ENCODE measurements at regions of chr12 and their contacts with region 1.

Region 1: DNA sequence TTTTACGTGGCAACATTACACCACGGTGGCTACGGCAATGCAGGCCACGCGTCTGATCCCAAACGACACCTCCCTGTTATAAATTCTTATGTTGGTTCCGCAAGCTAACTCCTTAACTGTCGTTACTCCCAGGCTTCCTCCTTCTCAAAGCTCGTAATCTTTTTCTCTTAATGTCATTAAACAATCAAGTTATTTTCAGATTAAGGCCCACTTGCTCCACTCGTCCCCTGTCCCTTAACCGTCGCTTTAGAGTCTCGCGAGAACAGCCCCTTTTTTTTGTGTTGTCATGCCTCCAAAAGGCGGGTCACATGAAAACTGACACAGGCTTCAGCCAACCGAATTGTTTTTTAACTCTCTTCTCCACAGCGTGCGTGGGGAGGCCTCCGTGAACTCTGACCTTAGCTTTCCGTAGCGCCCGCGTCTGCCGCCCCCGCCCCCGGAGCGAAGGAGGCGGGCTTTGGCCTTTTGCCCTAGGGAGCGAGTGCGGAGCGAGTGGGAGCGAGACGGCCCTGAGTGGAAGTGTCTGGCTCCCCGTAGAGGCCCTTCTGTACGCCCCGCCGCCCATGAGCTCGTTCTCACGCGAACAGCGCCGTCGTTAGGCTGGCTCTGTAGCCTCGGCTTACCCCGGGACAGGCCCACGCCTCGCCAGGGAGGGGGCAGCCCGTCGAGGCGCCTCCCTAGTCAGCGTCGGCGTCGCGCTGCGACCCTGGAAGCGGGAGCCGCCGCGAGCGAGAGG is at the start of gene CAND1:
- DNase-seq: peak; percentile 78 to 89
- H3K4me3 ChIP-seq: peak within 1 kb of the TSS; percentile 89 to 98 (median 96)
- H3K27ac ChIP-seq: peak within 1 kb of the TSS; percentile 96
- H3K4me1 ChIP-seq: peaks cover 0 to 2% (median 0%) of the 10 kb centered on the region in 4 experiments; a peak in 1 of 7 replicates
- H3K27me3 ChIP-seq: no peaks in the 10 kb centered on the region
- CTCF ChIP-seq: no peak
- EP300 ChIP-seq: no peak
- POLR2A ChIP-seq: peak; percentile 72 to 73
- RAD21 ChIP-seq: no peak; a peak in 1 of 4 replicates
- total RNA-seq, gene CAND1: 271 and 277 TPM in 2 replicates

Region 2: DNA sequence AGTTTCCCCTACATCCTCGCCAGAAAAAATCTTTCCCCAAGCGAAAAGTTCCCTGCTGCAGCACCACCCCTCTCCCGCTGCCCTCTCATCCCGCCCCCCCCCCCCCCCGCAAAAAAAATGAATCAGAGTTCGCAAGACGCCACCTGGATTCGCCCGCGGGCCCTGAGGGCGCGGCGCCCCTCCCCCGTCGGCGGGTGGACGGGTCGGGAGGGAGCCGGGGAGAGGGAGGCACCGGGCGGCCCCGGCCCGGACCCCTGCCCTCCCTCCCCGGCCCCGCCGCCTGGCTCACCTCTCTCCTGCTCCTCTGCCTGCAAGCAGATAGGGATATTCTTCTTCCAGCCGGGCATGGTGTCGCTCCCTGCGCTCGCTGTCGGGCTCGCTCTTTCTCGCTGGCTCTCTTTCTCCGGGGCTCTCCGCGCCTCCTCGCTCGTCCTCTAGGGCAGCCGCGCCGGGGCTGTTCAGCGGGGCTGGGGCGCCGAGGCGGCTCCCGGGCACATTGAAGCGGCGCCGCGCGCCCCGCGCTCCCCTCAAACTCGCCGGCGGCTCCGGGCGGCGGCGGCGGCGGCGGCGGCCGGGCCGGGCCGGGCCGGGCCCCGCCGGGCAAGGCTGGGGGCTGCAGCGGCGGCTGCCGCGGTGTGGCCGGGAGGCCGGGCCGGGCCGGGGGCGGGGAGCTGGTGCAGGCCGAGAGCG is 200.2 kb before region 1 on chr12:
- CTCF ChIA-PET with region 1: no interaction called
- POLR2A ChIA-PET with region 1: interaction called, 11 read pairs
- DNase-seq: peak; percentile 25 to 78
- H3K4me3 ChIP-seq: peak overlapping the region; percentile 59 to 86 (median 70)
- H3K27ac ChIP-seq: no peak overlapping the region
- H3K4me1 ChIP-seq: peaks cover 4 to 10% (median 6%) of the 10 kb centered on the region in 4 experiments
- H3K27me3 ChIP-seq: no peaks in the 10 kb centered on the region; a peak in 2 of 7 replicates
- CTCF ChIP-seq: peak in 1 of 3 experiments; percentile 6; a peak in 1 of 4 replicates
- EP300 ChIP-seq: no peak
- POLR2A ChIP-seq: no peak
- RAD21 ChIP-seq: no peak

Region 3: DNA sequence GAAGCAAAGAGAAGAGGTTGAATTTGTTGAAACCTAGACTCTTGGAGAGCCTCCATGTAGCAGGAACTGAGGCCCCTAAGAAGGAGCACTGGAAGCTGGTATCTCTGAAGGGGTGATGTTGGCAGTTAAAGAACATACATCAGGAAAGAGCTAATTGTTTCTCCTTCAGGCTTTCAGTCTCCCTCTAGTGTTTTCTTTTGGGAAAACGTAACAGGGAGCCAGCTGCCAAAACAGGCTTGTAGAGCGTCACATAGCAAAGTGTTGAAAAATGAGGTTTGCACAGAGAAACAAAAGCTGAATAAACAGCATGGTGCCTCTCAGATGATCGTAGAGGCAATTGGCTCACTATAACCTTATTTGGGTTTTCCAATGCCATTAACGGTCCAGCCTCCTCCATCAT is 46.8 kb before region 1 on chr12:
- CTCF ChIA-PET with region 1: no interaction called
- POLR2A ChIA-PET with region 1: no interaction called
- DNase-seq: no peak
- H3K4me3 ChIP-seq: no peak overlapping the region
- H3K27ac ChIP-seq: no peak overlapping the region
- H3K4me1 ChIP-seq: peaks cover 0 to 4% (median 2%) of the 10 kb centered on the region in 4 experiments; a peak in 3 of 7 replicates
- H3K27me3 ChIP-seq: no peaks in the 10 kb centered on the region
- CTCF ChIP-seq: peak in 2 of 3 experiments; percentile 40 to 66; a peak in 2 of 4 replicates
- EP300 ChIP-seq: no peak
- POLR2A ChIP-seq: no peak
- RAD21 ChIP-seq: peak; percentile 67 to 69

Region 4: DNA sequence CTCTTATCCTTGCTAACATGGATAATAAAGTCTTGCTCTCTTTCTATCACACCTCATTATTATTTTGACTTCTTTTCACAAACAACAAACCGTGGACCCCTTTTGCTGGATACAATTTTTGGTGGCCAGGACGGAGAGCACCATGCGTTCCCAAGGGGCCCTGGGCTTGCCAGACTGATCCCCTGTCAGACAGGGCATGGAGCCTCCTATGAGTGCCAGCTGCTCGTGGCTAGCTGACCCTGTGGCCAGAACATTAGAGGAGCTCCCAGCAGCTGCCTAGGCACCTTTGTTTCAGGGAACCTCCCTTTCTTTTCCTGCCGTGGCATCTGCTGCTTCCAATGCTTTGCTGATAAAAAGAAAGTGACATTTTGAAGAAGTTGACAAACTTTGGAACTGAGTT is 12.4 kb before region 1 on chr12:
- CTCF ChIA-PET with region 1: interaction called, 5 read pairs
- POLR2A ChIA-PET with region 1: interaction called, 36 read pairs
- DNase-seq: no peak
- H3K4me3 ChIP-seq: no peak overlapping the region
- H3K27ac ChIP-seq: no peak overlapping the region
- H3K4me1 ChIP-seq: no peaks in the 10 kb centered on the region
- H3K27me3 ChIP-seq: no peaks in the 10 kb centered on the region
- CTCF ChIP-seq: no peak
- EP300 ChIP-seq: no peak
- POLR2A ChIP-seq: no peak
- RAD21 ChIP-seq: no peak

Region 5: GRCh38 chr12:67280572-67280971 is 11.5 kb after region 1 on chr12:
- CTCF ChIA-PET with region 1: interaction called, 6 read pairs
- POLR2A ChIA-PET with region 1: interaction called, 33 read pairs
- DNase-seq: no peak
- H3K4me3 ChIP-seq: no peak overlapping the region
- H3K27ac ChIP-seq: no peak overlapping the region
- H3K4me1 ChIP-seq: peaks cover 0 to 2% (median 0%) of the 10 kb centered on the region in 4 experiments; a peak in 1 of 7 replicates
- H3K27me3 ChIP-seq: no peaks in the 10 kb centered on the region
- CTCF ChIP-seq: no peak
- EP300 ChIP-seq: no peak
- POLR2A ChIP-seq: no peak
- RAD21 ChIP-seq: no peak

Region 6: DNA sequence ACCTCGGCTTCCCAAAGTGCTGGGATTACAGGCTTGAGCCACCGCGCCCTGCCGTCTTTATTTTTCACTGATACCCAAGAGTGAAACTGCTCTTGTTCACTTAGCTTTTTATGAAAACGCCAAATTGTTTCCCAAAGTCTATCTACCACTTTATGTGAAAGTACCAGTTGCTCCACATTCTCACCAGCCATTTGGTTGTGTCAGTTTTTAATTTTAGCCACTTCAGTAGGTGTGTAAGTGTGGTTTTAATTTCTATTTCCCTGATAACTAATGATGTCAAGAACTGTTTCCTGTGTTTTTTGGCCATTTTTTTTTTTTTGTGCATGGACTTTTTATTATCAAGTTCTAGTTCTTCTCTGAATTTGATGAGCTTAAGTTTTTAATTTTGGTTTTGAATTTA is 17.2 kb after region 1 on chr12:
- CTCF ChIA-PET with region 1: no interaction called
- POLR2A ChIA-PET with region 1: interaction called, 33 read pairs
- DNase-seq: no peak
- H3K4me3 ChIP-seq: no peak overlapping the region; a peak in 1 of 8 replicates
- H3K27ac ChIP-seq: no peak overlapping the region
- H3K4me1 ChIP-seq: no peaks in the 10 kb centered on the region
- H3K27me3 ChIP-seq: no peaks in the 10 kb centered on the region
- CTCF ChIP-seq: no peak
- EP300 ChIP-seq: no peak
- POLR2A ChIP-seq: no peak
- RAD21 ChIP-seq: no peak

Region 7: DNA sequence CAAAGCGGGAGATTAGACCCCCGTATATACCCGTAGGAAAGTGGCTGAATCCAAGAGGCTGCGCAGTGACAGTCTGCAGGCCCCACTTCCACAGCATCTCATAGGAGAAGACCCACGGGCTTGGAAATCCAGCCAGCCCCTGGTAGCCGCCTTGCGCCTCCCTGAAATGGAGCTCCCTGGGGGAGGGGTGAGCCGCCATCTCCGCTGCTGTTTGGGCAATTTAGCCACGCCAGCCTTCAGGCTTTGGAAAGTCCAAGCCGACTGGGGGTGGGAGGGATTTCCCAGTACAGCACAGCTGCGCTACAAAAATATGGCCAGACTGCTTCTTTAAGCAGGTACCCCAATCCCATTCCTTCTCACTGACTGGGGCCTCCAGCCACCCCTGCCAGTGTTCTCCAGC is 53.5 kb after region 1 on chr12:
- CTCF ChIA-PET with region 1: no interaction called
- POLR2A ChIA-PET with region 1: interaction called, 13 read pairs
- DNase-seq: no peak
- H3K4me3 ChIP-seq: no peak overlapping the region
- H3K27ac ChIP-seq: no peak overlapping the region
- H3K4me1 ChIP-seq: no peaks in the 10 kb centered on the region
- H3K27me3 ChIP-seq: no peaks in the 10 kb centered on the region
- CTCF ChIP-seq: no peak
- EP300 ChIP-seq: no peak
- POLR2A ChIP-seq: no peak; a peak in 1 of 3 replicates
- RAD21 ChIP-seq: no peak

Region 8: DNA sequence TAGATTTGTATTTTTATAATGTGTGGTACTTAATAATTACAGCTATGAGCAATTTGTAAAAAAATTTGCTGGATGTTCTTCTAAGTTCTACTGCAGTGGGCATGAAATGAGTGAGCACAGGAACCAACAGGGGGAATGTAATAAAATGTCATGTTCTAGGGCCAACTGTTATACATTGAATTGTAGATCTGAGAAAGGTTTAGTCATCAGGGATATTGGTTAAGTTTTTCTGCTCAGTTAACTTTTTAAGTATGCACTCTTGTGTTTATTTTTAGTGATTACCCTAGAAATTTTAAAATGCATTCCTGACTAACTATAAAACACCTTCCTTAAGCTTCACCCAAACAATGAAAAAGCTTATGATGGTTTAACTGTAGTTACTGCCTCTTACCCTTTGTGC is 101.9 kb after region 1 on chr12:
- CTCF ChIA-PET with region 1: no interaction called
- POLR2A ChIA-PET with region 1: no interaction called
- DNase-seq: no peak
- H3K4me3 ChIP-seq: no peak overlapping the region
- H3K27ac ChIP-seq: no peak overlapping the region
- H3K4me1 ChIP-seq: no peaks in the 10 kb centered on the region
- H3K27me3 ChIP-seq: no peaks in the 10 kb centered on the region
- CTCF ChIP-seq: no peak
- EP300 ChIP-seq: no peak
- POLR2A ChIP-seq: no peak
- RAD21 ChIP-seq: no peak

Measured in H1 (cell line).